Right ventricle myocardium superior (tissue), 1 donor: ENCODE measurements at regions of chr3 and their contacts with region 1.

Region 1: DNA sequence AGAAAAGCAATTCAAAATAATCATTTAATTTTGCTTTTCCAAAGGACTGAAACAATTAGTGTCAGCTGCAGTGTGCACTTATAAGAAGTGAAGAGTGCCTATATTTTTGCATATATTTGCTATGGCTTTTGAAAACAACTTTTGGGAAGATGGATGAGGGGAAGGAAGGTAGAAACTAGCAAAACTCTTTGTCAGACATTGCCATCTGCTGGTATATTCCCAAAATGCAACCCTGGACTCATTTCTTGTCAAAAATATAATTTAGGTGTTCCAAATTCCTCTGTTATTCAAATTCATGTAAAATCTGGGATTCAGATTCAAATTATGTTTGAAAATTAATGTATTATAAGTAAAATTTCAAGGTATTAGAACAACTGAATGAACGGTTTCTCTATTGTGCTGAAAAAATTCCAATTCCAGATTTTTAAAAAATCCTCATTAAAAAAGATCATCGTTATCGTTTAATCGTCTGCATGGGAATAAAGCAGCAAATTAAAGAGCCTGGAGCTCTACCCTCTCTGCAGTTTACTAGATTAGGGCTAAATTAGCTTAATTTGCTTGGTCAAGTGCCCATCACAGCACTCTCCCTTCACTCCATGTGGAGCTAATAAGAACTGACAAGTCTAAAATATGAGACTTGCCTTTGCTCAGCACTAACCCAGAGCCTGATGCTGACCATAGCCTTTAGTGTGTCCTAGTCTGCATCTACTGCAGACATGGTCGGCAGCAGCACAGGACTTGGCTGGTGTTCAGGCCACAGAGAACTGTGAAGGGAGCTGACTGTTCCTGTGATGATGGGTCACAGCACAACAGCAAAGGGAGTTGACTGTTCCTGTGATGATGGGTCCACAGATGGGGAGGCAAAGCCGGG is 67.9 kb upstream of the MITF start:
- DNase-seq: no peak
- ATAC-seq: peak; percentile 79

Region 2: DNA sequence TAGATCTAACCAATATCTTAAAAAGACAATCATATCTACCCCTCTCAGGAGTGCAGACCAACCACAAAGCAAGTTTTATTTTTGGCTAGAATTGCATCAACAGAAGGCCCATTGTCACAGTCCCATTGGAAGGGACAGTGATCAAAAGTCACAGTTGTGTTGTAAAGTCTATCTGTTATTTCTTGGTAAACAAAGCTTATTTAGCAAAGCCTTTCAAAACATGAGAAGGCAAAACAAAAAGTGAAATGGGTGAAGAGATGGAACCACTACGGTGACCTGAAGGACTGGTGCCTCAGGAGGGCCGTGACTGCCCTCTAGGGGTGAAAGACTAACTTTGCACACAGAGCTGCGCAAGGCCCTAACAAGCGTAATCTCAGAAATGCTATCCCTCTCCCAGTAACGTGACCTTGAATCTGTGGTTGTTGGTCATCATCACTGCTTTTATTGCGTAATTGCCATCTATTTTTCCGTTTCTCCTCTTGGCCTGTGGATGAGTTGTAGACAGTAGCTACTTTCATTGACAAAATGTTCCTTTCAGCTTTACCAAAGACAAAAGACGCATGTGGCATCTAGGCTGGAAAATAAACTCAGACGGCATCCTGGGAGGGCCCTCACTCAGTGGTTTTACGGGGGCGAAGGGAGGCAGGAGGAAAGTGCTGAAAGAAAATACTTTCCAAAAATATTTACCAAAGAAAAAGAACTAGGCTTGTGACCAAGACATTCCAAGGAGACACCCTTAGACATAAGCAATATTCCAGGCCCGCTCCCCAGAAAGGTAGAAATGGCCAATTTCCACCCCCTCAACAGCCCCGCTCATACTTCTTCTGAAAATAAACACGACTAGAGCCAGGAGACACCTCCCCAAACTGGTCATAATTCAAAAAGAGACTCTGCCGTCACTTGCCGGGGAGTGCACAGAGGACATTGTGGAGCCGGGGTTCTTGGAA is 364.8 kb before region 1 on chr3:
- intact Hi-C with region 1: loop called (anchors 5 kb)
- DNase-seq: peak; percentile 69
- ATAC-seq: peak; percentile 96

Region 3: GRCh38 chr3:69439643-69440270 is 231.6 kb before region 1 on chr3:
- intact Hi-C with region 1: loop called (anchors 10 kb)
- DNase-seq: no peak
- ATAC-seq: peak; percentile 62

Region 4: DNA sequence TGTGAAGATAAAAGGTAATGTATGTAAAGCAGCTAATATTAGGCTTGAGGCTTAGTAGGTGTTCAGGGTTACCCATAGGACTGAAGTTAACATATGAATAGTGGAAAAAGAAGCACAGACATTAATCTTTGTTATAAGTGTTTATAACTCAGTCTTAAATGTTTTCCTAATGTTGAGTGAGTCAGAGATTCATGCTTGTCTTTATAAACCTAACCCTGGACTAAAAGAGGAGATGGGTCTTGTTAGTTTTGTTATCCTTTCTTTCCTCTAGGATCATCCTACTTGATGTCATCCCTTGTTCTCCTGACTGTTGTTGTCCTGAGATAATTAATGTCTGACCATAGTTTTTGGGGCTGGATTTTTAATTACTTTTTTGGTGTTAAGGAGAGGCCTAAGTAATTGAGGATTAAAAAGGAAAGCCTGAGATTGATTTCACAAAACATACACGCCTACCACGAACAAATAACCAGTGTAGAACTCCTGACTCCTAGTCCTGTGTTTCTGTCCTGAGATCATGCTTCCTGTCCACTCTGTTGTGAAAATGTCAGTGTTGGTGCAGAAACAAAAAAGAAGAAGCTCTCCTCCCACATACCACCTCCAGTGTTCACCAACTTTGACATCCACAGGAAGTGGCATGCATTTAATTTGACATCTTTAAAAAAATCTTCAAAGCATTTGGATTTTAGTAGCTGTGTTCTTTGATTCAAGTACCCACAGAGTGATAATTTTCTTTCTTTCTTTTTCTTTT is 76.4 kb after region 1 on chr3:
- intact Hi-C with region 1: no loop called
- DNase-seq: no peak
- ATAC-seq: no peak